ENCODE measurements at regions of chr17 and their contacts with region 1.

Region 1: DNA sequence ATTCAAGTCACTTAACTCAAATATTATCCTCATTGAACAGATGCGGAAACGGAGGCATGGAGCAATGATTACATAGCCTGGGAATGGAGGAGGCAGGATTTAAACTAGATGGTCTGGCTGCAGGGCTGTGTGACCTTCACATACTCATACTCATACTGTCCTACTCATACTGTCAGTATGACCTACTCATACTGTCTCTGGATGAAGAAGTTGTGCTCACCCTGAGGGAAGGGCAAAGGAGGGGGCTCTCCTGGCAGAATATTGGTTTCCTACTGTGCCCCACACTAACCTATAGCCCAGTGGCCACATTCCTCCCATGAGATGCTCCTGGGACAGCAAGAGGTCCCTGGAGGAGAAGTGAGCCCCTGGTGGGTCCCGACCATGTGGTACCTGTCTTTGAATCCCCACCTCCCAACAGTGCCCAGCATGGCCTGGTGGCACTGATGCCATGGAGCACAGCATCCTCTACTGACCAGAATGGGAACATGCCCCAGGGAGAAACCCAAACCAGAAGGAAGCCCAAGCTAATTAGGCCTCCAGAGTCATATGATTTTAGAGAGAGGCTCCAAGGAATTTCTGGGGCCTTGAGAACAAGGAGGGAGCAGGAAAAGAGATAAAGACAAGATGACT is 197.3 kb upstream of the SDK2 start:
- DNase-seq: no peak
- ATAC-seq: no peak
- H3K4me3 ChIP-seq: no peak overlapping the region
- H3K27ac ChIP-seq: no peak overlapping the region
- H3K4me1 ChIP-seq: no peaks in the 10 kb centered on the region
- H3K27me3 ChIP-seq: no peaks in the 10 kb centered on the region
- CTCF ChIP-seq: peak in 3 of 7 experiments; percentile 19 to 23 (median 20)
- POLR2A ChIP-seq: no peak

Region 2: GRCh38 chr17:73785958-73786743 is 55.4 kb before region 1 on chr17:
- intact Hi-C with region 1: no loop called
- DNase-seq: peak in 1 of 4 donors; percentile 17
- ATAC-seq: no peak
- H3K4me3 ChIP-seq: no peak overlapping the region
- H3K27ac ChIP-seq: no peak overlapping the region
- H3K4me1 ChIP-seq: no peaks in the 10 kb centered on the region
- H3K27me3 ChIP-seq: no peaks in the 10 kb centered on the region
- CTCF ChIP-seq: no peak
- POLR2A ChIP-seq: no peak

Region 3: GRCh38 chr17:73901661-73902415 is 60.3 kb after region 1 on chr17:
- intact Hi-C with region 1: loop called (anchors 10 kb)
- DNase-seq: peak; percentile 34 to 63 (median 44)
- ATAC-seq: peak; percentile 52
- H3K4me3 ChIP-seq: peak overlapping the region in 1 of 2 donors; percentile 19
- H3K27ac ChIP-seq: no peak overlapping the region
- H3K4me1 ChIP-seq: peaks cover 12% of the 10 kb centered on the region
- H3K27me3 ChIP-seq: peaks cover 0 to 5% of the 10 kb centered on the region in 2 donors
- CTCF ChIP-seq: no peak
- POLR2A ChIP-seq: no peak

Measured in body of pancreas (tissue), 4 donors.